ENCODE measurements at regions of chr1 and their contacts with region 1.

Region 1: DNA sequence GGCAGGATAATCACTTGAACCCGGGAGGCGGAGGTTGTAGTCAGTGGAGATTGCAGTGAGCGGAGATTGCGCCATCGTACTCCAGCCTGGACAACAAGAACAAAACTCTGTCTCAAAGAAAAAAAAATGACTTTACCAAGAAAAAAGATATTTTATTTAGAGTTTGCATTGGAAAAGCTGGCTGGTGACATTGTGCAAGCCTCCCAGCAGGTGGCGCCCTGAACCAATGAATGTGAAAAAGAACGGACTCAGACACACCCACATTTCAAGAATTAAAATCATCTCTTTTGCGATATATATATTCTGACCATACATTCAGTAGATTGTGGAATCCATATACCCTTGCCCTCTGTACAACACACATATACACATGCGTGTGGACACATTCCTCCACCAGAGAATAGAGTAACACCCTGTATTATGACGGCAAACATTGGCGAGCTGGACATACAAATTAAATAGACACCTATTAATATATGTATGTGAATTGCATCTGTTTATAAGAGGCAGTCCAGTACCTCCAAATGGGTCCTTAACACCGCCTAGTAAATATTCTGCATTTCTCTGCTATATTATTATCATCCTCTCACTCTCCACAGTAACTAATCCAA is 39.0 kb upstream of the CADM3 start:
- DNase-seq: peak; percentile 18 to 71 (median 38)
- ATAC-seq: no peak
- H3K4me3 ChIP-seq: no peak overlapping the region
- H3K27ac ChIP-seq: no peak overlapping the region
- H3K4me1 ChIP-seq: no peaks in the 10 kb centered on the region
- H3K27me3 ChIP-seq: peaks cover 0 to 24% (median 0%) of the 10 kb centered on the region in 9 donors
- CTCF ChIP-seq: peak; percentile 52 to 87 (median 72)
- POLR2A ChIP-seq: no peak

Region 2: GRCh38 chr1:159197561-159198557 is 65.5 kb after region 1 on chr1:
- intact Hi-C with region 1: loop called in 1 of 10 experiments (anchors 5 kb)
- DNase-seq: peak in 4 of 5 donors; percentile 37 to 60 (median 47)
- ATAC-seq: peak in 3 of 4 donors; percentile 67 to 73 (median 68)
- H3K4me3 ChIP-seq: no peak overlapping the region
- H3K27ac ChIP-seq: no peak overlapping the region
- H3K4me1 ChIP-seq: no peaks in the 10 kb centered on the region
- H3K27me3 ChIP-seq: peaks cover 0 to 37% (median 2%) of the 10 kb centered on the region in 9 donors
- CTCF ChIP-seq: peak; percentile 61 to 81 (median 74)
- POLR2A ChIP-seq: no peak

Region 3: DNA sequence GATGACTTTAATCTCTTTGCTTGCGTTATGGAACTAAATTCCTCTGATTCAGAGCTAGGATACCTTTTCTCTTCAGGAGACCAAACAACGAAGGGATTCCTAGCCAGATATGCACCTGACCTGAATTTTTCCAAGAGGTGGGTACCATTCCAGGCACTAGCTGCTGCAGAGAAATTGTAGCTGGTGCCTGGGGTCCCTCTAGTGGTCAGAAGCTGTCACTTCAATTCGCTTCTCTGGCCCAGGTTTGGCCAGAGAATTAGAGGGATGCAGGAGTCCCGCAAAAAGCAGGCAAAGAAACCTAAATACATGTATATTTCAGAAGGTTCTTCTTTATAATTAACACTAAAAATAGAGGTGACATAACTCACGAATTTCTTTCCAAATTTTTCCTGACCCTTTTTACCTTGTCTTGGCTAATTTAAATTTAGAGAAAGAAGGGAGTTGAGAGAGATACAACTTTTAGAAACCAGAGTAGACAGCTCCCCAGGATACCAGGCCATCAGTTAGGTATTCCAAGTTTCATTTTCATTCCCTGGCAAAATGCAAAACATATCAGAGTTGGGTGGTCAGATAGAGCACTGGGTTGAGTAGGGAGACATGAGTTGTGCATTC is 81.9 kb after region 1 on chr1:
- intact Hi-C with region 1: loop called in 1 of 10 experiments (anchors 2 kb)
- DNase-seq: no peak
- ATAC-seq: peak in 3 of 4 donors; percentile 45 to 72 (median 61)
- H3K4me3 ChIP-seq: no peak overlapping the region
- H3K27ac ChIP-seq: no peak overlapping the region
- H3K4me1 ChIP-seq: peaks cover 0 to 6% (median 0%) of the 10 kb centered on the region in 12 donors
- H3K27me3 ChIP-seq: peaks cover 0 to 44% (median 8%) of the 10 kb centered on the region in 9 donors
- CTCF ChIP-seq: peak; percentile 82 to 95 (median 87)
- POLR2A ChIP-seq: no peak

Measured in heart left ventricle (tissue), 16 donors.